ENCODE measurements at regions of chr6 and their contacts with region 1.

Region 1: DNA sequence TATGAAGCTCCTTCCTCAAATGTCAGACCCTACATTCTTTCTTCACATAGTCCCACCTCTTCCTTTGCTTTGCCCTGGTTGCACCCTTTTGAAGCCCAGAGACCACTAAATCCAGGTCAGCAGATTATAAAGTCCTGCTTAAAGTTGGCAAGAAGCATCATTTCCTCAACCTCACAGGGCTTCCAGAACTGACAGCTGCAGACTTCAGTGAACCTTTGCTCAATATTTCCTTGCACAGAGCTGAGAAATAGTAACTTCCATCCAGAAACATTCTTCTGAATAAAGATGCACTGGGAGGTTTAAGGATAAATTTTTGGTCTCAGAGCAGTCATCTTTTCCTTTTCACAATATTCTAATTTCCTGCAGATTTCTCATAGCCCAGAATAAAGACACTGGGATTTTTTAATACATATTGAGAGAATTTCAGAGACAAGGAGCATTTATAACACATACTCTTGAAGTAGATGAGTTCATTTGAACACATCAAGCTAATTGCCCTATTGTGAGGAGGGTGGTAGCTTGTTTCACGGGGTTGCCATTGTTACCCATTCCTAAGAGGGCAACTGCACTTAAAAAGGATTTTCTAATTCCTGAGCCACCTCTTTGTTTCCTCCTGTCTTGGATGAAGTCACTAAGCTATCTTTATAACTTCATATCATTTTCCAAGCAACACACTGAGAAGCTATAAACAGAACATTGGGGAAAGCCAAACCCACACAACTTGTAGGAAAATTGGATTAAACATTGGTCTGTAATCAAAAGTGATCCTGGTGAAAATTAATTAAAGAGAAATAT is 150.2 kb upstream of the PLN start:
- DNase-seq: no peak
- ATAC-seq: peak; percentile 30 to 83 (median 58)
- H3K4me3 ChIP-seq: no peak overlapping the region
- H3K27ac ChIP-seq: peak overlapping the region in 8 of 10 donors; percentile 3 to 54 (median 30)
- H3K4me1 ChIP-seq: peaks cover 0 to 22% (median 7%) of the 10 kb centered on the region in 9 donors
- H3K27me3 ChIP-seq: no peaks in the 10 kb centered on the region
- CTCF ChIP-seq: no peak

Region 2: DNA sequence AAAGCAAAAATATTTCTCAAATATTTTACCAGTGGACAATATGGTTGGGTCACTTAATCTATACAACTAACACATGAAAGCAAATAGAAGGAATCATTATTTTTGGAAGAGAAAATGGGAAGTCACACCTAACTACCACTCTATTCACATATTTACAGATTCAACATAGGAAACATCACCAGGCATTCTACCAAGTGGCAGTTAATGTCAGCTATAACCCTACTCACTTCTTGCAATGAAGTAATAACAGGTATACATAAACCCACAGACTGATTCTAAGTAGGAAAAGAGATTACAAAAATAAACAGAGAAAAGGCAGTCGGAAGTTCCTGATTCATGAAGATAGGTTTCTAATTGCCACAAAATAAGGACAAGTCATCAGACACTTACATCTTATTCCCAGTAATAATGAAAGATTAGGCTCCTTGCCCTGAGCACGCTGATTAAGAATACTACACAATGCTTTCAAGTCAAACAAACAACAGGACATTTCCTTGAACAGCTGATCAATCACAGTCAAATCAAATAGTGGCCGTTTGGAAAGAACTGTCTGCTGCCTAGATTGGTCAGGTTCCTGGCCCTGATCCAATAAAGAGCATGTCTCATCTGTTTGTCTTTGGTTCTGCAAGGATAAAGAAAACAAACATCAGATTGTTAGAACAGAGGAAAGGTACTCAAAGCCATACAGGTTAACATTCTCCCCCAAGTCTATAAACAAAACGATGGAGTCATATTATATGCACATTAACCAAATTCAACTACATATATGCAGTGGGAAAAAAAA is 71.0 kb after region 1 on chr6:
- intact Hi-C with region 1: loop called in 1 of 10 experiments (anchors 10 kb)
- DNase-seq: no peak
- ATAC-seq: no peak
- H3K4me3 ChIP-seq: no peak overlapping the region
- H3K27ac ChIP-seq: no peak overlapping the region
- H3K4me1 ChIP-seq: peaks cover 0 to 11% (median 0%) of the 10 kb centered on the region in 9 donors
- H3K27me3 ChIP-seq: no peaks in the 10 kb centered on the region
- CTCF ChIP-seq: no peak

Region 3: DNA sequence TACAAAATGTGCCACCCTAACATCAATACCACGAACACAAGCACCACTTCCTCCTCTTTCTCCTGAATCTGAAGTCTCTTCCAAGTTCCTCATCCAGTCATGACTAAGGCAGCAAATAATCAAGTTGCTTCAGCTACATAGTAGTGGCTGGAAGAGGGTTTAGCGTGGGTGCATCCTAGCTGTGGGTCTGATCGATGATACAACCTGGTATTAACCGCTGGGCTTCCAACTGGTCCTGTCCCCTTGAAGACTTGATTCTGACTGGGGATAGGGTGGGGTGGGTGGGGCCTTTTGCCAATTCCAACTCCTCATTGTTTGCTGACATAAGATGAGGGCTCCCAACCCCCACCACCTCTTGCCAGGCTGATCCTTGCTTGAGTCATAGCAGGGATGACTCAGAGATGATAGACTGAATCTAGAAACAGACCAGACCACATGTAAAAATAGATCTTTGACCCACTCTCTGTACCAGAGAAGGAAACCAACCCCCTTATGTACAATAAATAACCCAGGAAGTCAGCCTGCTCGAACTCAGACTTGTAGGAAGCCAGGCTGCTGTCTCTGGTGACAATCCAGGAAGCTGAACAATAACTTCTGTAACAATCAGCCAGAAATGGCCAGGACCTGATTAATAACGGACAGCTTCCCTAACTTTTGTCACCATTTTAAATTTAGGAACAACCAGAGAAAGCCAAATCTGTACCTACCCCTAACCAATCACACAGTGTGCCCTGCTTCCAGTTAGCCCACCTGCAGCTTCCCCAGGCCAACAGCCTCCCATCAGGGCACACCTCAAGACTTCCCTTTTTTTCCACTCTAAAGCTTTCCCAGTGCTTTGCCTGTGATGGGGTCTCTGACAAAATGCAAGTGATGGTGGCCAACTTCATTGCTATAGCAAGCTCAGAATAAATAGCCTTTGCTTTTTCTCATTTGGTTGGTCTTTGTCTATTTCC is 749.5 kb after region 1 on chr6:
- intact Hi-C with region 1: no loop called
- DNase-seq: peak in 1 of 2 donors; percentile 30
- ATAC-seq: peak in 7 of 8 donors; percentile 54 to 97 (median 70)
- H3K4me3 ChIP-seq: no peak overlapping the region
- H3K27ac ChIP-seq: peak overlapping the region in 3 of 10 donors; percentile 43 to 65 (median 52)
- H3K4me1 ChIP-seq: peaks cover 0 to 37% (median 13%) of the 10 kb centered on the region in 9 donors
- H3K27me3 ChIP-seq: no peaks in the 10 kb centered on the region
- CTCF ChIP-seq: no peak

Measured in heart right ventricle (tissue), 16 donors.